ENCODE measurements at regions of chr20 and their contacts with region 1.

Region 1: GRCh38 chr20:35146920-35147574 is at the start of gene EDEM2:
- DNase-seq: peak; percentile 95
- H3K4me3 Mint-ChIP-seq: peak within 1 kb of the TSS; percentile 91
- H3K27ac Mint-ChIP-seq: peak within 1 kb of the TSS; percentile 86
- H3K4me1 Mint-ChIP-seq: peaks cover 23% of the 10 kb centered on the region
- H3K27me3 Mint-ChIP-seq: no peaks in the 10 kb centered on the region
- total RNA-seq, gene EDEM2: 15.5 to 15.8 TPM

Region 2: GRCh38 chr20:34302723-34303528 is 844.1 kb before region 1 on chr20 and contains the start of gene AHCY:
- CTCF ChIA-PET with region 1: no interaction called
- intact Hi-C with region 1: loop called (anchors 2 kb)
- DNase-seq: peak; percentile 95
- H3K4me3 Mint-ChIP-seq: peak within 1 kb of the TSS; percentile 84
- H3K27ac Mint-ChIP-seq: peak within 1 kb of the TSS; percentile 86
- H3K4me1 Mint-ChIP-seq: peaks cover 4% of the 10 kb centered on the region
- H3K27me3 Mint-ChIP-seq: no peaks in the 10 kb centered on the region
- total RNA-seq, gene AHCY: 258 to 261 TPM

Region 3: GRCh38 chr20:35092524-35093266 is 54.4 kb before region 1 on chr20 and contains the start of gene TRPC4AP:
- CTCF ChIA-PET with region 1: interaction called, 23 read pairs
- intact Hi-C with region 1: loop called (anchors 1 kb)
- DNase-seq: peak; percentile 90
- H3K4me3 Mint-ChIP-seq: peak within 1 kb of the TSS; percentile 89
- H3K27ac Mint-ChIP-seq: peak within 1 kb of the TSS; percentile 100
- H3K4me1 Mint-ChIP-seq: peaks cover 59% of the 10 kb centered on the region
- H3K27me3 Mint-ChIP-seq: no peaks in the 10 kb centered on the region
- total RNA-seq, gene TRPC4AP: 49.6 to 51.7 TPM

Region 4: DNA sequence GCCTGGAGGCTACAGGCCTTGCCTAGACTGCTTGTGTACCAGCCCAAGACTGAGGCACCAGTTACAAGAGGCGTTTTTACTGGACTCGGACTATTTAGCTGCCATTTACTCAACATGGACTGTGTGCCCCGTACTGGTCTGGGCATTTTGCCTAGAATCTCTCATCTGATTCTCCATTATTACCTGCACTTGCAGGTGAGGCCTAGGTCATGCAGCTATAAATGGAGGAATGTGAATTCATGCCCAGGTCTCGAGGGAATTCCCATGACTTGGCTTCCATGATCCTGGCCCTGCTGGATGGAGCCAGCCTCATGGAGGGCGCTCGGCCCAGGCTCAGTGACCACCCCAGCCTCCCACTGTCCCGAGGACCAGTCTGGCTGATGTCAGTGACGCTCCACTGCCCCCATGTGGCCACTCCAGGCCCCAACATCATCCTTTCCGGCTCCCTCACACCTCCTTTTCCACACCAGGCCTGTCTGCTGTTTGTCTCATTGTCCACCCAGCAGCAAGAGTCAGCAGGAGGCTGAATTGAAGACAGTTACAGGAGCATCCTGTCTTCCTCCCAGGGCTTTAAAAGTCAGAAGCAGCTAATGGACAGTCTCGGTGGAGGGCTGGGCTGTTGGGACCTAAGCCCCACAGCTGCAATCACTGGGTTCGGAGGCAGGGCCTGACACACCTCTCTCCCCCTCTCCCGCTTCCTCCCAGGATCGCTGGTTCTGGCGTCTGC is 122.2 kb after region 1 on chr20:
- CTCF ChIA-PET with region 1: interaction called, 9 read pairs
- intact Hi-C with region 1: loop called (anchors 1 kb)
- DNase-seq: peak; percentile 64
- H3K4me3 Mint-ChIP-seq: no peak overlapping the region
- H3K27ac Mint-ChIP-seq: no peak overlapping the region
- H3K4me1 Mint-ChIP-seq: no peaks in the 10 kb centered on the region
- H3K27me3 Mint-ChIP-seq: no peaks in the 10 kb centered on the region

Region 5: GRCh38 chr20:35329435-35330139 is 182.5 kb after region 1 on chr20:
- CTCF ChIA-PET with region 1: no interaction called
- intact Hi-C with region 1: no loop called
- DNase-seq: peak; percentile 81
- H3K4me3 Mint-ChIP-seq: no peak overlapping the region
- H3K27ac Mint-ChIP-seq: no peak overlapping the region
- H3K4me1 Mint-ChIP-seq: peaks cover 42% of the 10 kb centered on the region
- H3K27me3 Mint-ChIP-seq: no peaks in the 10 kb centered on the region

Region 6: DNA sequence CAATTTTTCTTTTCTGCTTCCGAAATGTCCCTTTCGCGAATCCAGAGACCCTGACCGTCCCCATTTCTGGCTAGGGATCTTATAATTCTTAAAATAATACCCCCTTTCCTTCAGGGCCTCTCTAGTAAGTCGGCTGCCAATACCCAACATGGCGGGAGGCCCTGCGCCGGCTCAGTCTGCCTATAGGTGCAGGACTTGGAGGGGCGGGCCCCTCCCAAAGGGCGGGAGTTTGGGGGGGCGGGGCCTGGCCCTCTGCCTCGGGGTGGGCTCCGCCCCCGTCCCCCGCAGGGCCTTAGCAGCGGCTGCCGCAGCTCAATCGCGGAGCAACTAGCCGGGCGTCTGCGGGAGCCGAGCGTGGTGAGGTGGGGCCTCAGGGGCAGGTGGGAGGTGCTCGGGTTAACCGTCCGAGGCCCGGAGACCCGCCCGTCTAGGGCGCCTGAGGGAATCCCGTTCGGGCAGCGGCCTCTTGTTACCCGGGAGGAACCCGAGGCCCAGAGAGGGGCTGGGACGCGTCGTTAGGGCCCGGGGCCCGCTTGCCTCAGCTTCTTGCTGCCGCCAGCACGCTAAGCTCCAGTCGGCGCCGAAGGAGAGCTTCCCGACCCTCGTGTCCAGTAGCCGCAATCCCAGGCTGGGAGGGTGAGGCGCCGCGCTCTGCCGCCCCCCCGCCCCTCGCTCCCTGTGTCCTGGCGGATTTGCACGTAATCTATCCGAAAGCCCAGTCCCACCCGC is 308.0 kb after region 1 on chr20 and contains the start of gene CEP250:
- CTCF ChIA-PET with region 1: interaction called, 3 read pairs
- intact Hi-C with region 1: loop called (anchors 1 kb)
- DNase-seq: peak; percentile 94
- H3K4me3 Mint-ChIP-seq: peak within 1 kb of the TSS; percentile 89
- H3K27ac Mint-ChIP-seq: peak within 1 kb of the TSS; percentile 99
- H3K4me1 Mint-ChIP-seq: peaks cover 27% of the 10 kb centered on the region
- H3K27me3 Mint-ChIP-seq: no peaks in the 10 kb centered on the region
- total RNA-seq, gene CEP250: 43.4 to 46.9 TPM